GM12878 (cell line): ENCODE measurements at regions of chr17 and their contacts with region 1.

Region 1: GRCh38 chr17:9644910-9645751 is at the start of gene USP43:
- DNase-seq: no peak
- ATAC-seq: peak; percentile 50
- H3K4me3 ChIP-seq: peak within 1 kb of the TSS; percentile 71
- H3K27ac ChIP-seq: no peak within 1 kb of the TSS
- H3K4me1 ChIP-seq: peaks cover 4% of the 10 kb centered on the region; the same call in 1 of the 2 replicates
- H3K27me3 ChIP-seq: peaks cover 2 to 4% of the 10 kb centered on the region in 2 experiments
- CTCF ChIP-seq: no peak
- EP300 ChIP-seq: no peak
- POLR2A ChIP-seq: no peak
- RAD21 ChIP-seq: no peak
- polyA plus RNA-seq, gene USP43: not detected

Region 2: DNA sequence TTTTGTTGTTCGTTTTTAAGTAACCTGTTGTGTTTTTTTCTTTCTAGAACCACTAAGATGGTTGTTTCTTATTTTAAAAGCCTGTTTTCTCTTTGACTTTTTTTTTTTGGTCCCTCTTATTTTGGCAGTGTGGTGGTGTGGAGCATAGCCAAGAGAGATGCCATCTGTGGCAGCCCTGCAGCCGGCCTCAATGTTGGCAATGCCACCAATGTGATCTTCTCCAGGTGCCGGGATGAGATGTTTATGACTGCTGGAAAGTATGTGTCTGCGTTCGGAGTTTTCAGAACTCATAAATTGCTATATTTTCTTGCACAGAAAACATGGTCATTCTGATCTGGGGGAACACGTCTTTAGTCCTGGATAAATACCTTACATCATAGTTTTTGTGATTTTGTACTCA is 51.1 kb before region 1 on chr17:
- CTCF ChIA-PET with region 1: no interaction called
- POLR2A ChIA-PET with region 1: no interaction called
- RAD21 ChIA-PET with region 1: no interaction called
- SMC1A ChIA-PET with region 1: no interaction called
- in situ Hi-C with region 1: loop called (anchors 5 kb)
- intact Hi-C with region 1: no loop called
- DNase-seq: no peak
- ATAC-seq: no peak
- H3K4me3 ChIP-seq: no peak overlapping the region
- H3K27ac ChIP-seq: no peak overlapping the region
- H3K4me1 ChIP-seq: no peaks in the 10 kb centered on the region
- H3K27me3 ChIP-seq: no peaks in the 10 kb centered on the region
- CTCF ChIP-seq: no peak
- EP300 ChIP-seq: no peak
- POLR2A ChIP-seq: no peak
- RAD21 ChIP-seq: no peak

Region 3: GRCh38 chr17:9790889-9791876 is 146.1 kb after region 1 on chr17 and contains the start of gene DHRS7C:
- CTCF ChIA-PET with region 1: no interaction called
- POLR2A ChIA-PET with region 1: no interaction called
- RAD21 ChIA-PET with region 1: no interaction called
- SMC1A ChIA-PET with region 1: no interaction called
- in situ Hi-C with region 1: no loop called
- intact Hi-C with region 1: no loop called
- DNase-seq: no peak
- ATAC-seq: no peak
- H3K4me3 ChIP-seq: no peak within 1 kb of the TSS
- H3K27ac ChIP-seq: no peak within 1 kb of the TSS
- H3K4me1 ChIP-seq: no peaks in the 10 kb centered on the region
- H3K27me3 ChIP-seq: no peaks in the 10 kb centered on the region
- CTCF ChIP-seq: no peak
- EP300 ChIP-seq: no peak
- POLR2A ChIP-seq: no peak
- RAD21 ChIP-seq: no peak
- polyA plus RNA-seq, gene DHRS7C: not detected